Vagina (tissue), 2 donors: ENCODE measurements at regions of chr18 and their contacts with region 1.

Region 1: GRCh38 chr18:51051105-51051712 is 21.2 kb downstream of the SMAD4 start:
- DNase-seq: no peak
- H3K4me3 ChIP-seq: no peak overlapping the region
- H3K27ac ChIP-seq: no peak overlapping the region
- H3K4me1 ChIP-seq: peaks cover 7% of the 10 kb centered on the region
- H3K27me3 ChIP-seq: no peaks in the 10 kb centered on the region
- CTCF ChIP-seq: peak; percentile 23 to 56 (median 47)
- POLR2A ChIP-seq: no peak

Region 2: DNA sequence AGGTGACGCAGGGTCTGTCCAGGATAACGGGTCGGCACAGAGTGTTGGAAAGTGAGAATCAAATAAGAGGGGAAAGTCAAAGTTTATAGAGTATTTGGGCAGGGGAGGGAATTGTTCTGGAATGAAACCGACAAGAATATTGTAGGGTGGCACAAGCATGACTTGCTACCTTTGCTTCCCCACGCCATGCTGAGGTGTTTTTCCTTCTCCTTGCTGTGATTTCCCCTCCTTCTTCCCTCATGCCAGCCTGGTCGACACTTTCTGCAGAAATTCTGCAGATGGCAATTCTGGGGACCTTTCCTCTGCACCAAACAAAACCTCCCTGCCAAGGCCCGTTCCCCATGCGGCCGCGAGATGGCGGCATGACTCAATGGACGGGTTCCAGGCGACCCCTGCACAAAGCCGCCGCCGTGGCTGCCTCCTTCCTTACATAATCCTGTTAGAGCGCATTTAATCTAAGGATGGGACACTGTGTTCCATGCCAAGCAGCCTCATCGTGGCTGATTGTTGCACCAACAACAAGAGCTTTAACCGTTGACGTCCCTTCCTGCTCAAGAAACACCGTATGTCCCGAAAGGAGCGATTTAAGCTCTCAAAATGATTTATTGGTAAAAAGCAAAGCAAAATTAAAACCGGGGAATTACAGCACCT is 231.4 kb before region 1 on chr18 and contains the start of gene MRO:
- intact Hi-C with region 1: loop called (anchors 10 kb)
- DNase-seq: no peak
- H3K4me3 ChIP-seq: peak within 1 kb of the TSS; percentile 29 to 34
- H3K27ac ChIP-seq: peak within 1 kb of the TSS; percentile 20
- H3K4me1 ChIP-seq: peaks cover 20% of the 10 kb centered on the region
- H3K27me3 ChIP-seq: no peaks in the 10 kb centered on the region
- CTCF ChIP-seq: peak; percentile 55 to 93 (median 83)
- POLR2A ChIP-seq: no peak
- total RNA-seq, gene MRO: not detected

Region 3: DNA sequence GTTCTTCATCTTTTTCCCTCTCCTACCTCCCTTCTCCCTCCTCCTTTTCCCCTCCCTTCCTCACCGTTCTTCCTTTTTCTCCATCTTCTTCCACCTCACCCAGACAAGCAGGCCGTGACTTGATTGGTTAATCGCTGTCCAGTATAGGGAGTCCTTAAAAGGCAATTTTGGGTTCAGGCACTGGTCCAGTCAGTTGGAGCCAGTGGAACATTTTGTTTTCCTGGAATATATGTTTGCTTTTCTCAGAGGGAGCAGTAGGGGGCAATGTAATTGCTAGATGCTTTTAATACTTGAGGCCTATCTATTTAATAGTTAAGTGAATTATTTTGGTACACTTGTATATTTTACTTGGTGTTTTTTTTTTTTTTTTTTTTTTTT is 68.4 kb before region 1 on chr18:
- intact Hi-C with region 1: no loop called
- DNase-seq: no peak
- H3K4me3 ChIP-seq: no peak overlapping the region
- H3K27ac ChIP-seq: peak overlapping the region; percentile 46
- H3K4me1 ChIP-seq: peaks cover 21% of the 10 kb centered on the region
- H3K27me3 ChIP-seq: no peaks in the 10 kb centered on the region
- CTCF ChIP-seq: no peak
- POLR2A ChIP-seq: no peak

Region 4: GRCh38 chr18:51030537-51031258 is 20.5 kb before region 1 on chr18:
- intact Hi-C with region 1: no loop called
- DNase-seq: no peak
- H3K4me3 ChIP-seq: peak overlapping the region; percentile 74 to 79
- H3K27ac ChIP-seq: peak overlapping the region; percentile 95
- H3K4me1 ChIP-seq: peaks cover 67% of the 10 kb centered on the region
- H3K27me3 ChIP-seq: no peaks in the 10 kb centered on the region
- CTCF ChIP-seq: no peak
- POLR2A ChIP-seq: no peak